Activated CD4-positive, alpha-beta T cell treated with anti-CD3 and anti-CD28 coated beads for 36 hours (primary cell): ENCODE measurements at regions of chr9 and their contacts with region 1.

Region 1: DNA sequence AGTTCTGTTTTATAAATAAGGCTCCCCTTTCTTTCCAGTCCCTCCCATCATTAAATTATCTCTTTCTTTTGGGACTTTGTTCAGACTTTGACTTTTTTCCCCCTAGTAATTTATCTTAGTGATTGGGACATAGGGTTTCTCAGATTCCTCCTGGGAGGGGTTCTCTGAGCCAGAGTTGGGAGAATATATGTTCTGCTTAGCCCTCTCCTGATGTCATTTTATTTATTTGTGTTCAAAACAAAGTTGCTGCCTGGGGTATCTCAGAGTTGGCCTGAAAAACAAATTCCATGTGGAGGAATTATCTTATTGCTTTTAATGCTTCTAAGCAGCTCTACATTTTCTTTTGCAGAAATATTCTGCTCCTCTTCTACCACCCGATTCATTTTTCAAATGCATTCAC is 211.0 kb downstream of the PCSK5 start:
- DNase-seq: no peak
- ATAC-seq: no peak
- H3K4me3 Mint-ChIP-seq: no peak overlapping the region
- H3K27ac Mint-ChIP-seq: no peak overlapping the region
- H3K4me1 Mint-ChIP-seq: peaks cover 15% of the 10 kb centered on the region
- H3K27me3 Mint-ChIP-seq: no peaks in the 10 kb centered on the region

Region 2: DNA sequence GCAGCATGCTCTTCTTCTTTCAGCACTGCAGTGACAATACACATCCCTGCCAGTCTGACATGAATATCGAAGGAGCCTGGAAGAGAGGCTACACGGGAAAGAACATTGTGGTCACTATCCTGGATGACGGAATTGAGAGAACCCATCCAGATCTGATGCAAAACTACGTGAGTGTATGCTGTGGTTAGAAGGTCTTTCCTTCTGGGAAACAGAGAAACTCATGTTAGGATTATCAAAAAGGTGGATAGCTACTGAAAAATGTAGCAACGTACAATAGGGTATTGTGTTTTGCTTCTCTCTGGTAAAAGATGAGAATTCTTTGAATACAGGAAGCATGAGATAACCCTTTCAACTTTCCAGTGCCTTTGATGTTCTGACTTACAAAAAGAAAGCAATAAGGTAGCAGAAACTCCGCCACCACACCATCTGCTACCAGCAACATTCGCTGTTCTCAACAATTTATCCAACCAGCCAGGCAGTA is 77.7 kb before region 1 on chr9:
- CTCF ChIA-PET with region 1: no interaction called
- POLR2A ChIA-PET with region 1: no interaction called
- intact Hi-C with region 1: no loop called
- DNase-seq: peak; percentile 63
- ATAC-seq: peak; percentile 83
- H3K4me3 Mint-ChIP-seq: peak overlapping the region; percentile 56
- H3K27ac Mint-ChIP-seq: peak overlapping the region; percentile 88
- H3K4me1 Mint-ChIP-seq: peaks cover 89% of the 10 kb centered on the region
- H3K27me3 Mint-ChIP-seq: no peaks in the 10 kb centered on the region

Region 3: DNA sequence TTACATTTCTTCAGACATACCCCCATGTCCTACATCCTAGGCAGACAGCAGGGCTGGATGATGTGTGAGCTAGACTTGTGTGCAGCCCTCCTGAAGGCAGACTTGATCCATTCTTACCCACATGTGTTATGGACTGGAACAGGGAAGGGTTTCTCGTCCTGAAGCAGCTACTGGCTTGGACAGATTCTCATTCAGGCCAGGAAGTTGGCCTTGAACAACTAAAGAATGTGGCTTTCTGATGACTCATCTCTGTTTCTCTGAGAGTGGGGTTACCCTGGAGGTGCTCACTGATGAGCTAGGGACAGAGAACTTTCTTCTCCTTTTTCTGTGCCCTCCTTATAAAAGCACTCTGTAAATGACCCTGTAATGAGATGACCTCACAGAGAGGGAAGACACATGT is 35.5 kb after region 1 on chr9:
- CTCF ChIA-PET with region 1: no interaction called
- POLR2A ChIA-PET with region 1: no interaction called
- intact Hi-C with region 1: loop called in 1 of 2 experiments (anchors 5 kb)
- DNase-seq: no peak
- ATAC-seq: peak; percentile 64
- H3K4me3 Mint-ChIP-seq: no peak overlapping the region
- H3K27ac Mint-ChIP-seq: no peak overlapping the region
- H3K4me1 Mint-ChIP-seq: peaks cover 8% of the 10 kb centered on the region
- H3K27me3 Mint-ChIP-seq: no peaks in the 10 kb centered on the region

Region 4: DNA sequence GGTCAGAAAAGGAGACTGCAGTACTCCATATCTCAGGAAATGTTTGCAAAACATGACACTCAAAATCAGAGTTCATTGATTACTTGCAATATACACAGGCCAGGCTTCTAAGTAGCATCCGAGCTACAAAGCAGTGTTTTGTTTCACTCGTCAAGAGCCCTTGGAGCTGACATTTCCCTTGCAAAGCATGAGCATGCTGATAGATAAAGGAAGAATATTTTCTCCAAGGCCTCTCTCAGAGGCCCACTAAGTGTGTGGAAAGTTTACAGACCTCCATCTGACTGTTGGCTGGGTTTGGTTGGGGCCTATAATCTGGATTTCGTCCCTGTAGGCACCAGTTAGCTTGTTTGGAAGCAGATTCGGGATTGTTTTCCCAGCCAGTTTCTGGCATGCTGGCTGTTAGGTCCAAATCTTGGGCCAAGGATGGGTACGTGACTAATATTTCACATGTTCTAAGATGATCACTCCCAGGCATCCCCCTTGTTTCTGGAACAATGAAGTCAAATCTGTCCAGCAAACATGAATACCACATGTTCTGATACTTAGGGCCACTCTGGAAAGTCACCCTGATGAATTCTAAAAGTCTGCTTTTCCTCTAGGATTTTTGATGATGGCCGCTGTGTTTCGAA is 131.5 kb after region 1 on chr9:
- CTCF ChIA-PET with region 1: no interaction called
- POLR2A ChIA-PET with region 1: no interaction called
- intact Hi-C with region 1: no loop called
- DNase-seq: no peak
- ATAC-seq: no peak
- H3K4me3 Mint-ChIP-seq: no peak overlapping the region
- H3K27ac Mint-ChIP-seq: no peak overlapping the region
- H3K4me1 Mint-ChIP-seq: no peaks in the 10 kb centered on the region
- H3K27me3 Mint-ChIP-seq: no peaks in the 10 kb centered on the region